ENCODE measurements at regions of chr1 and their contacts with region 1.

Region 1: DNA sequence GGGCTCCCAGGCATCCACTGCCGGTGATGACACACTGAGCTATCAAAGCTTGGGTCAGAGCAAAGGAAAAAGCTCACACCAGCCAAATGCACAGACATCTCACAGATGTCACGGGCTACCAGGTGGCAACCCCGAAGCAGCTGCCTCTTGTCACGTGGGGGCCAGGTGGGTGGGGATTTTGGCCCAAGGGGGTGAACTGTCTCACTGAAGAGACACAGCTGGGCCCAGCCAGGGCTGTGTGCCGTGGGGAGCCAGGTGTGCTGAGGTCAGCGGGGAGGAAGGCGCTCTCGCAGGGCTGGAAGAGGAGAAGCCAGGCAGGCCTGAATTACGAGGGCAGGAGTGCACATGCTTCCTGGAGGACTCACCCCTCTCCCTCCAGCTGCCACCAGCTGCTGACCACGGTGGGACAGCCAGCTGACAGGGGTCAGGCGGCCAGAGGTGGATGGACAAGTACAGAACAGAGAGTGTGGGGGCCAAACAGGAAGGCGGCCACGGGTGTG is 32.4 kb downstream of the KCNN3 start:
- DNase-seq: no peak
- H3K4me3 ChIP-seq: no peak overlapping the region
- H3K27ac ChIP-seq: no peak overlapping the region
- H3K4me1 ChIP-seq: peaks cover 0 to 11% (median 4%) of the 10 kb centered on the region in 4 experiments; a peak in 4 of 7 replicates
- H3K27me3 ChIP-seq: no peaks in the 10 kb centered on the region
- CTCF ChIP-seq: no peak
- EP300 ChIP-seq: no peak
- POLR2A ChIP-seq: no peak
- RAD21 ChIP-seq: no peak

Region 2: DNA sequence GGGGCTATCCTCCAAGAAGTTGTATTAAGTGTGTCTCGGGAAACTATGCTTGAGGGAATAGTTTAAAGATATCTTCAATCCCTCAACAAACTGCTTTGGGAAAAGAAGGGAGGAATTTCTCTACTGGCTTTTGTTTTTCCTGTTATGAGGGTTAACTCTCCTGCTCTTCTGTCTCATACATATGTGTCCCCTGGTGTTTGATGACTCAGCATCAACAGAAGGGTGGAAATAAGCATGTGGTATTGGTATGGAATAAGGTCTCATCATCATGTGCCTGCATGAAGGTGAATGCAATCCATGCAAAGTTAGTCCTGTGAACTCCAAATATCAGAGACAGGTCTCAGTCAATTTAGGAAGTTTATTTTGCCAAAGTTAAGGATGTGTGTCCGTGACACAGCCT is 202.6 kb before region 1 on chr1:
- CTCF ChIA-PET with region 1: no interaction called
- POLR2A ChIA-PET with region 1: no interaction called
- DNase-seq: no peak
- H3K4me3 ChIP-seq: no peak overlapping the region
- H3K27ac ChIP-seq: no peak overlapping the region
- H3K4me1 ChIP-seq: no peaks in the 10 kb centered on the region
- H3K27me3 ChIP-seq: no peaks in the 10 kb centered on the region
- CTCF ChIP-seq: no peak
- EP300 ChIP-seq: no peak
- POLR2A ChIP-seq: no peak
- RAD21 ChIP-seq: no peak

Region 3: GRCh38 chr1:154682254-154682653 is 155.5 kb before region 1 on chr1:
- CTCF ChIA-PET with region 1: no interaction called
- POLR2A ChIA-PET with region 1: no interaction called
- DNase-seq: no peak
- H3K4me3 ChIP-seq: no peak overlapping the region
- H3K27ac ChIP-seq: no peak overlapping the region
- H3K4me1 ChIP-seq: no peaks in the 10 kb centered on the region; a peak in 1 of 7 replicates
- H3K27me3 ChIP-seq: no peaks in the 10 kb centered on the region
- CTCF ChIP-seq: peak in 1 of 3 experiments; percentile 16; a peak in 1 of 4 replicates
- EP300 ChIP-seq: no peak
- POLR2A ChIP-seq: no peak
- RAD21 ChIP-seq: no peak; a peak in 1 of 4 replicates

Region 4: GRCh38 chr1:154847891-154848290 is 10.2 kb after region 1 on chr1:
- CTCF ChIA-PET with region 1: interaction called, 15 read pairs
- POLR2A ChIA-PET with region 1: no interaction called
- DNase-seq: no peak
- H3K4me3 ChIP-seq: no peak overlapping the region
- H3K27ac ChIP-seq: no peak overlapping the region
- H3K4me1 ChIP-seq: peaks cover 3 to 18% (median 8%) of the 10 kb centered on the region in 4 experiments; a peak in 6 of 7 replicates
- H3K27me3 ChIP-seq: no peaks in the 10 kb centered on the region
- CTCF ChIP-seq: no peak
- EP300 ChIP-seq: no peak
- POLR2A ChIP-seq: no peak
- RAD21 ChIP-seq: no peak